ENCODE measurements at regions of chr2 and their contacts with region 1.

Region 1: DNA sequence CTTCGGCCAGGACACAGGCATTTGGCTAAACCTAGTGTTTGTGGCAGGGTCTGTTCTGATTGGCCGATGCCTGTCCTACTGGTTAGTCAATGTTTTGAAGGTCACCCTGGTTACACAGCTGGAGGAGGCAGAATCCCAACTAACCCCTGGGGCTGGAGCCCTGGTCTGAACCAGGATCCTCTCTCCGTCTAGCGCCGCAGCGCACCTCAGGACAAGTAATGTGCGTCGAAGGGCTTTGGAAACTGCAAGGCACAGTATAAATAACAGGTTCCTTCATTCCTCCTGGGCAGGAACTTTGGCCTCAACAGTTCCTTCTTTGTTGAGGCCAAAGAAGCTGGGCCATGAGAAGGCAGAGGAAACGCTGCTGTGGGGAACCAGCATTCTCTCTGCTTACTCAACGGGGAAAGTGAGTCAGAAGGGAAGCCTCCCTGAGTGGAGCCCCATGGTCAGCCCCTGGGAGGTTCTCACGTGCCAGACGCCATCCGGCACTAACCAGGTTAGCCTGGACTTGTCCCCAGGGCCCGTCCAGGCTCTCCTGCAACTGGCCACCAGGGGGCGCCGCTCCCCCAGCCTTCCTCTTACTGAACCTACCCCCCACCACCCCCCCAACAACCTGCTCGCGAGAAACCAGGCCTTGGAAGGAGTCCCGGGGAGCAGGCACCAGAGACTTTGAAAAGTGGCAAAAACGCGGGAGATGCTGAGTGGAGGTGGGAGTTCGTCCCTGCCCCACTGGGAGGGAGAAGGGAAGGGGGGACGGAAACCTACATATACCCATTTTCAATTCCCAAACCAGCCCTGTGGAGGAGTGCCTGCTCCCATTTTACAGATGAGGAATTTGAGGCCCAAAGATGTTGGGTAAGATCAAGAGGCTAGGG is 19.8 kb downstream of the TEX44 start:
- DNase-seq: peak; percentile 95
- ATAC-seq: peak; percentile 74

Region 2: GRCh38 chr2:231541645-231542044 is 70.8 kb before region 1 on chr2:
- intact Hi-C with region 1: no loop called
- DNase-seq: no peak
- ATAC-seq: peak; percentile 32

Region 3: DNA sequence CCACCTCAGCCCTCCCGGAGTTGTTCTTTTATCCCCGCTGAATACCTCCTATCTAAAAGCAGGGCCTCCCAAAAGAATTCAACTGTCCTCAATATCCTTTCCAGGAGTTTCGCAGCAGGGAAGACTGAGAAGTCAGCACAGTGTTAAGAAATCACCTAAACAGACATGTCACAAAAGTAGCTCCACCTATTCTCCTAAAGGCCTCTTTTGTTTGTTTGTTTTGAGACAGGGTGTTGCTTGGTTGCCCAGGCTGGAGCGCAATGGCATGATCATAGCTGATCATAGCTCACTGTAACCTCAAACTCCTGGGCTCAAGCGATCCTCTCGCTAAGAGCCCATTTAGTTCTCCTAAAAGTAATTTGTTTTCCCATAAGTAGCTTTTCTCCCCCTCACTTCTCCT is 34.1 kb after region 1 on chr2:
- intact Hi-C with region 1: loop called (anchors 2 kb)
- DNase-seq: no peak
- ATAC-seq: peak; percentile 46

Region 4: DNA sequence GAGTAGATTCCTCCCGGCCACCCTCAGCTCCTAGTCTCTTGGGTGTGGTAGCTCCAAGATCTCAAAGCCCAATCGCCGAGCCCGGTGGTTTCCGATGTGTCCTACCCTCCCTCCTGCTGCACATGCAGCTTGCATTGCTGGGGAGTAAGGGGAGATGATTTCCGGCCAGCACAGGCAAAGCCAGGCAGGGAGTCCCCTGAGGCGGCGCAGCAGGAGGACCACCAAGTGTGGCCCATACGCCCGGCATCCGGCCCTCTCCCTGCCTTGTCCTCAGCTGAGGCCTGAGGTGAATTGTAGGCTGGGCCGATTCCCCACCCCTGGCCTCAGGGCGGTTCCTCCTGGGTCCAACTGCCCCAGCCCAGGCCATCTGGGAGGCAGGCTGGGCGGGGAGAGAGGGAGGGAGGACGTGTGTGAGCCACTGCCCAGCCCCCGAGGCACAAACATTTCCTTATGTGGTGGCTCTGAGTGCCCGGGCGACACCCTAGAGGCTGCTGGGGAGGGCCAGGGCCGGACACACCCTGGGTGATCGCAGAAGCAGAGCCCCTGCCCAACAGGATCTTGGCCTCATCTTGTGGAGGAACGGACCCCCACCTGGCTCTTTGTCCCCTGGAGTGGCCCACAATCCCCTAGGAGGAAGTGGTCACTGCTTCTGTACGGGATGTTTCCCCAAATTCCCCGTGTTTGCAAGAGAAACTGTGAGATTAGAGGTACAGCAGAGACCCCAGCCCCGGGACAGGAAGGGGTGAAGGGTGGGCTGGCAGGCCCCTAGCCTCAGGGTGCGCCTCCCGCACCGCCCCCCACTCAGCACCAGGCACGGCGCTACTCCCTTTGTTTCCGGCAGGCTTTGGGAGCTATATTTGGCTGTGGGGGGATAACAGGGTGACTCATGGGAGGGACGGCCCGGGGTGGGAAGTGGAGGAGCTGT is 54.0 kb after region 1 on chr2:
- intact Hi-C with region 1: loop called (anchors 2 kb)
- DNase-seq: peak; percentile 97
- ATAC-seq: peak; percentile 84

Region 5: DNA sequence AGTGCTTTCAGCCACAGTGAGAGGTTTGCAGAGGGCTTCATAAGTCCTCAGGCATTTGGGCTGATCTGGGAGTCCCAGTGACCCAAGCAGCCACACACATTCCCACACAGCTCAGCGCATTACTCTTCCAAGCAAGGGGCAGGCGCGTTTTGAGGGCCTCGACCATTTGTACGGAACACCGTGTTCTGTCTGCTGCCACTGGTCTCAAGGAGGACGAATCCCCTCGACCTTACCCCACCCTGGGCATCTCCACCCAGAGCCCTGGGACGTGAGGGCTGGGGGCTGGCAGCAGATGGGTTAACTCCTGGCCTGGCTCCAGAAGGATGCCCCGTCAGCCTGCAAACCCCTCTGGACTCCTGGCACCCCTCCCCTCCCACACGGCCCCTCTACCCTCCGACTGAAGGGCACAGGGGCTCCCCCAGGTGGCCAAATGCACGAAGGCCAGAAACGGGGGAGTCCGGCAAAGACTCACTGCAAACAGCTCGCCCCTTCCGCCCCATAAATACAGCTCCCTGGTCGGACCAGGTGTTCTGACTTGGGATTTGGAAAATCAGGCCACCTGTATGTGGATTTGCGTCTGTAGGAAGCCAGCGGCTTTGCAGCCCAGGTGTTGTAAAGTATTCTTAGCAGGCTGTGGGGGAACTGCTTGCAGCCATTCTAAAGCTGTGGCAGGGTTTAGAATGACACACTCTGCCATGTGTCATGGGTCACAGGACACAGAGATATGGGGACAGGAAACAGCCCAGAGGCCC is 62.3 kb after region 1 on chr2:
- intact Hi-C with region 1: loop called (anchors 2 kb)
- DNase-seq: peak; percentile 80
- ATAC-seq: peak; percentile 61

Region 6: GRCh38 chr2:231713730-231714430 is 101.5 kb after region 1 on chr2:
- intact Hi-C with region 1: loop called (anchors 1 kb)
- DNase-seq: peak; percentile 95
- ATAC-seq: peak; percentile 52